ENCODE measurements at regions of chr9 and their contacts with region 1.

Region 1: DNA sequence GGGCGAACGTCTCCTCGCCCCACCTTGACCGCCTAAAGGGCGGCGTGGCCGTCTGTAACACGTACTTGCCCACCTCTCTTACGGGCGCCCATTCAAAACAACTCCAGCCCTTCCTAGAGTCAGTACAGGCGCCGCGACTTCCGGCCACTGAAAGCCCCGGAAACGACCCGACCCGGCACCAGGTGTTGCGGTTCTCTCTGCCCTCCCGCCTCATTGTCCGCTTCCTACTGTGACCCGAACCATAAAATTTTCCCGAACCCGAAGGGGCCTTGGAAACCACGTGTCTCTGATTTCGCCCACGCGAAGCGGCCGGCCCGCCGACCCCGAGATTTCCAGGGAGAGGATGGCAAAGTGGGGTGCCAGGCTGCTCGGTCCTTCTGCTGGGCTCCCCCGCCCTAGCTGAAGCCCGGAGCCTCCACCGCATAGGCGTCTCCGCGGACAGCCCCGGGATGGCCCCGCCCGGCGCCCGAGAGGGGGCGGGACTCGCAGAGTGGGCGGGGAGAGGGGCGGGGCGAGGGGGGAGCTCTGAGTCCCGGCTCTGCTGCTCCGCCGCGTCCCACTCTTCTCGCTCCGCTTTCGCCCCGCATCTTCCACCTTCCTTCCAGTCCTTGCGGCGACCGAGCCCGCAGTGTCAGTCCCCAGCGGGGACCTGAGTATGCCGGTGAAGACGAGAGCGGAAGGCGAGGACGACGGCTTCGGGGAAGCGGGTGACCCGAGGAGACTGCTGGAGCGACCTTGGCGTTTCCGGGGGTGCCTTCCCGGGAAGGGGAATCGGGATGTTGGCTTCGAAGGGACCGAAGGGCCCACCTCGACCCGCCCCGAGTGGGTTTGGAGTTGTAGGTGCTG is 684 bp upstream of the PTGES2 start:
- DNase-seq: peak; percentile 69 to 95 (median 83)
- ATAC-seq: peak; percentile 81
- H3K4me3 ChIP-seq: peak overlapping the region; percentile 99 to 100
- H3K4me3 Mint-ChIP-seq: peak overlapping the region; percentile 99
- H3K27ac ChIP-seq: peak overlapping the region; percentile 99
- H3K27ac Mint-ChIP-seq: peak overlapping the region; percentile 99
- H3K4me1 ChIP-seq: peaks cover 31% of the 10 kb centered on the region
- H3K4me1 Mint-ChIP-seq: peaks cover 38% of the 10 kb centered on the region
- H3K27me3 ChIP-seq: no peaks in the 10 kb centered on the region
- H3K27me3 Mint-ChIP-seq: peaks cover 2% of the 10 kb centered on the region
- CTCF ChIP-seq: no peak

Region 2: GRCh38 chr9:126700903-126701812 is 1427.1 kb before region 1 on chr9:
- CTCF ChIA-PET with region 1: no interaction called
- POLR2A ChIA-PET with region 1: no interaction called
- intact Hi-C with region 1: no loop called
- DNase-seq: peak in 1 of 9 experiments; percentile 4
- ATAC-seq: no peak
- H3K4me3 ChIP-seq: no peak overlapping the region
- H3K4me3 Mint-ChIP-seq: no peak overlapping the region
- H3K27ac ChIP-seq: no peak overlapping the region
- H3K27ac Mint-ChIP-seq: no peak overlapping the region
- H3K4me1 ChIP-seq: peaks cover 10% of the 10 kb centered on the region
- H3K4me1 Mint-ChIP-seq: peaks cover 11% of the 10 kb centered on the region
- H3K27me3 ChIP-seq: peaks cover 8% of the 10 kb centered on the region in 2 experiments
- H3K27me3 Mint-ChIP-seq: peaks cover 30% of the 10 kb centered on the region
- CTCF ChIP-seq: no peak

Region 3: DNA sequence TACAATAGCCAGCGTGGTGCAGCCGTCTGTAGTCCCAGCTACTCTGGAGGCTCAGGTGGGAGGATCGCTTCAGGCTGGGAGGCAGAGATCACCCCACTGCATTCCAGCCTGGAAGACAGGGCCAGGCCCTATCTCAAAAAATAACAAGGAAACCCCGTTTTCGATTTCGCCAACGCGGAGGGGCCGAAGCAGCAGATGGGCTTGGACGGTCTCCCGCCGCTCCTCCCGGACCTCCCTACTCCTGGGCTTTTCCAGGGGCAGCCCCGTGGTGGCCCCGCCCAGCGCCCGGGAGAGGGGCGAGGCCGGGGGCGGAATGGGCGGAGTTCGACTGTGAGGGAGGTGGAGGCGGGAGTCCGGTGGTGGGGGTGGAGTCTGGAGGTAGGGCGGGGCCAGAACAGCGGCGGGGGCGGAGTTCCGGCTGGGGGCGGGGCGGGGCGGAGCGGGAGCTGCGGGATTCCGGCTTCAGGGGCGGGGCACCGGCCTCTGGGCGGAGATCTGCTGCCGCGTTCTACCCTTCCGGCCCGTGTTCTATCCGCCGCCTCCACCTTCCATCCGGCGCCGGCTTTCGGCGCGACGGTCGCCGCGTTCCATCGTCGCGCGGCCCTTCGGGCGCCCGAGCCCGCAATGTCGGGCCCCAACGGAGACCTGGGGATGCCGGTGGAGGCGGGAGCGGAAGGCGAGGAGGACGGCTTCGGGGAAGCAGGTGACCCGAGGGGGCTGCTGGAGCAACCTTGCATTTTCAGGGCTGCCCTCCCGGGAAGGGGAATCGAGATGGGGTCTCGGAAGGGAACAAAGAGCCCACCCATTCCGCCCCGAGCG is 31.8 kb after region 1 on chr9 and contains the start of gene BBLN:
- CTCF ChIA-PET with region 1: no interaction called
- POLR2A ChIA-PET with region 1: interaction called, 10 read pairs
- intact Hi-C with region 1: loop called (anchors 1 kb)
- DNase-seq: peak; percentile 87 to 95 (median 93)
- ATAC-seq: peak; percentile 87
- H3K4me3 ChIP-seq: peak within 1 kb of the TSS; percentile 90 to 94
- H3K4me3 Mint-ChIP-seq: peak within 1 kb of the TSS; percentile 79
- H3K27ac ChIP-seq: peak within 1 kb of the TSS; percentile 70 to 86
- H3K27ac Mint-ChIP-seq: peak within 1 kb of the TSS; percentile 90
- H3K4me1 ChIP-seq: peaks cover 19% of the 10 kb centered on the region
- H3K4me1 Mint-ChIP-seq: peaks cover 17% of the 10 kb centered on the region
- H3K27me3 ChIP-seq: no peaks in the 10 kb centered on the region
- H3K27me3 Mint-ChIP-seq: no peaks in the 10 kb centered on the region
- CTCF ChIP-seq: no peak
- total RNA-seq, gene BBLN: 56.6 to 67.4 TPM